Right cardiac atrium (tissue), 5 donors: ENCODE measurements at regions of chr2 and their contacts with region 1.

Region 1: DNA sequence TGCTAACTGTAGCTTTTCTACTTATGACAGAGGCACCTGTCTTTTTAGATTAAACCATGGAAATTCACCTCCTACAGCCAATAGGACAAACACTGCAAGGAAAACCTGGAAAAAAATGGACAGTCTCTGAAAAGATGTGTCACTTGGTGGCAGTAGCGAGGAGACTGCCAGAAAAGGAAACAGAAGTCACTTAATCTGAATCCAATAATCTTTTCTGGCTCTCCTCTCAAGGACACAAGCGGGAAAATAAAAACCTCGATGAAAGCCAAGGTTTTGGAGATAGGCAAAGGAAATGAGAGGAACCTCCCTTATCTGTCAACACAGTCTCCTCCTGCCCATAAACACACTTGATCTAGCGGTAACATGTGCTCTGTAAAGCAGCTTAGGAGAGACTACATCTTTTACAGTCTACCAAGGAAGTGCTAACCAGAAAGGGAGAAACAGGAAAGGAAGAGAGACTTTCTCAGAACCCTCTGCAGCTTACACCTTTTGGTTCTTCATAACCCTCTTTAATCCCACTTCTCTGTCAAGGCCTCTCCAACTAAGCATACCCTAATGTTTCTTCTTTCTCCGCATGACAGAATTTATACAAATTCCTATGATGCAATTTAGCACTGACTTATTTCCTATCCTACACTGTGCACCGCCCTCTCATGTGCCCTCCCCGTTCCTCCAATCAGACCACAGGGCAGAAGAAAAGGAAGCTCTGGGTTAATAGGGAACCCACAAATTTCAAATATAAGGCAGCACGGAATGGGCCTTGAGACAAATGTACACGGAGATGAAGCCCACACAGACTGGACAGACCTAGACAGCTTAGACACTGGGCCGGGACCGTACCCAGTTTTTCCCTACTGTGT is 52.8 kb downstream of the CLASP1 start:
- DNase-seq: peak in 2 of 3 donors; percentile 35 to 63
- ATAC-seq: peak; percentile 85 to 89
- H3K4me3 ChIP-seq: peak overlapping the region; percentile 14
- H3K27ac ChIP-seq: peak overlapping the region; percentile 63
- H3K4me1 ChIP-seq: no peaks in the 10 kb centered on the region
- H3K27me3 ChIP-seq: no peaks in the 10 kb centered on the region

Region 2: GRCh38 chr2:121649596-121650314 is 53.3 kb after region 1 on chr2:
- intact Hi-C with region 1: loop called in 3 of 4 experiments (anchors 5 to 10 kb)
- DNase-seq: peak; percentile 98 to 99 (median 98)
- ATAC-seq: peak; percentile 99
- H3K4me3 ChIP-seq: peak overlapping the region; percentile 84
- H3K27ac ChIP-seq: peak overlapping the region; percentile 100
- H3K4me1 ChIP-seq: peaks cover 3% of the 10 kb centered on the region
- H3K27me3 ChIP-seq: no peaks in the 10 kb centered on the region